HepG2 (cell line): ENCODE measurements at regions of chr18 and their contacts with region 1.

Region 1: DNA sequence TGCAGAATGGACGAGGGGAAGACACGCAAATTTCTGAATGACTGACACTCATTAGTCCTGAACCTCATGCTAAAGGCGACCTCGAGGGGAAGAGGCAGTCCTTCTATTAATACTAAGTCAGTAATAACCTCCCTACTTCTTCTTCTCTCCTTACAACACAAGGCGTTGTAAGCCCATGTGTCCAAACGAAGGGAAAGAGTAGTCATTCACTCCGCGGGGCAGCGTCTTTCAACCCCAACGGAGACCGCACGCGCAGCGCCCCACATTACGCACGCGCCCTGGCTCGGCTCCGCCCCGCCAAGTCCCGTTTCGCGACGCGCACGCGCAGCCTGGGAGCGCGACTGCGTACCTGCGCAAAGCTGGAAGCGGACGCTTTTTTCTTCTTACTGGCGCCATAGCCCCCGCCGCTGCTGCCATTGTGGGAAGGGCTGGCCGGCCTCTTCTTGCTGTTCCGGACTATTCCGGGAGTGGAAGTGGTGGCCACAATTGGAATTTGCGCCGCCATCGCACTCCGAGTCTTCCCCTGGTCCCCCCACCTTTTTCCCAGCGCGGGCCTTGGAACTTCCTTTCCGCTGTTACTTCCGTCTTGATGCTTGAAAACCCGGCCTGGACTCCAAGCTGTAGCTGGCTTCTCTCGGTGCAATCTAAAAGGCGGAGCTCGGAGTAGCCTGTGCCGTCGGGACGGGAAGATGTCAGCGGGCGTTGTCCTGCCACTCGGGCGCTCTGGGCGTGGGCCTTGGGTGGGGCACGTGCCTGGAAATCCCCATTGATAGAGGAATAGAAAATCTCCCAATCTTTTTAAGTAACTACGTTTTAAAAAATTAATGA is at the start of gene INO80C:
- DNase-seq: peak; percentile 85
- ATAC-seq: peak; percentile 96
- H3K4me3 ChIP-seq: peak within 1 kb of the TSS; percentile 66 to 80 (median 73)
- H3K27ac ChIP-seq: peak within 1 kb of the TSS; percentile 91
- H3K4me1 ChIP-seq: peaks cover 75% of the 10 kb centered on the region
- H3K27me3 ChIP-seq: no peaks in the 10 kb centered on the region
- CTCF ChIP-seq: peak; percentile 8; the same call in 1 of the 2 replicates
- EP300 ChIP-seq: peak; percentile 43 to 47; a peak in 2 of 4 replicates
- POLR2A ChIP-seq: peak; percentile 90 to 95
- RAD21 ChIP-seq: peak; percentile 54; the same call in 1 of the 2 replicates
- total RNA-seq, gene INO80C: 8.2 and 10.8 TPM in 2 replicates

Region 2: GRCh38 chr18:35355140-35355618 is 142.4 kb before region 1 on chr18:
- CTCF ChIA-PET with region 1: no interaction called
- POLR2A ChIA-PET with region 1: no interaction called
- in situ Hi-C with region 1: no loop called
- intact Hi-C with region 1: no loop called
- DNase-seq: peak; percentile 85
- ATAC-seq: peak; percentile 100
- H3K4me3 ChIP-seq: peak overlapping the region in 2 of 3 experiments; percentile 25 to 38; a peak in 2 of 6 replicates
- H3K27ac ChIP-seq: no peak overlapping the region
- H3K4me1 ChIP-seq: no peaks in the 10 kb centered on the region
- H3K27me3 ChIP-seq: no peaks in the 10 kb centered on the region
- CTCF ChIP-seq: peak; percentile 92
- EP300 ChIP-seq: no peak
- POLR2A ChIP-seq: no peak
- RAD21 ChIP-seq: peak; percentile 74

Region 3: DNA sequence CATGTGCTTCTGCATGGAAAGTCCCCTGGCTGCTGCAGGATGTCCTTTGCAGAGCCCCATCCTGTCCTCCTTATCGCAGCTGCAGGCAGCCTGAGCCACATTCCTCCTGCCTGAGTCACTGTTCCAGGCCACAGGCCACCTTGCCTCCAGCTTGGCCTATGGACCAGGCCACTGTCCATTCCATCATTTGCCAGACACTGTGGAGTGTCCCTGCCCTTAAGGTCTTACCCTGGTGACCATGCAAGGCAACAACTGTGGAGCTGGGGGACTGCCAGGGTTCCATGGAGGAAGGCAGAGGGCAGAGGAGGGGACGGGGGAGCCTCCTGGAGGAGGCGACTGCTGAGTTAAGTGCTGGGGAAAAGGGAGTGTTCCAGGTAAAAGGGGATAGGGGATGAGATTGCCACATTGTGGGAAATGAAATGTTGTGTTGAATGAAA is 38.6 kb before region 1 on chr18:
- CTCF ChIA-PET with region 1: no interaction called
- POLR2A ChIA-PET with region 1: interaction called, 10 read pairs
- in situ Hi-C with region 1: no loop called
- intact Hi-C with region 1: loop called (anchors 5 kb)
- DNase-seq: peak; percentile 86
- ATAC-seq: peak; percentile 99
- H3K4me3 ChIP-seq: no peak overlapping the region
- H3K27ac ChIP-seq: no peak overlapping the region
- H3K4me1 ChIP-seq: peaks cover 35% of the 10 kb centered on the region
- H3K27me3 ChIP-seq: no peaks in the 10 kb centered on the region
- CTCF ChIP-seq: peak; percentile 28; the same call in 1 of the 2 replicates
- EP300 ChIP-seq: peak in 1 of 2 experiments; percentile 42; a peak in 2 of 4 replicates
- POLR2A ChIP-seq: no peak
- RAD21 ChIP-seq: no peak

Region 4: GRCh38 chr18:35478520-35479435 is 18.8 kb before region 1 on chr18:
- CTCF ChIA-PET with region 1: no interaction called
- POLR2A ChIA-PET with region 1: interaction called, 70 read pairs
- in situ Hi-C with region 1: no loop called
- intact Hi-C with region 1: loop called (anchors 1 kb)
- DNase-seq: peak; percentile 97
- ATAC-seq: peak; percentile 92
- H3K4me3 ChIP-seq: peak overlapping the region in 1 of 3 experiments; percentile 49; a peak in 1 of 6 replicates
- H3K27ac ChIP-seq: peak overlapping the region; percentile 85
- H3K4me1 ChIP-seq: peaks cover 71% of the 10 kb centered on the region
- H3K27me3 ChIP-seq: no peaks in the 10 kb centered on the region; a peak in 1 of 5 replicates
- CTCF ChIP-seq: no peak
- EP300 ChIP-seq: peak in 1 of 2 experiments; percentile 53; a peak in 2 of 4 replicates
- POLR2A ChIP-seq: peak; percentile 54 to 83
- RAD21 ChIP-seq: no peak

Region 5: DNA sequence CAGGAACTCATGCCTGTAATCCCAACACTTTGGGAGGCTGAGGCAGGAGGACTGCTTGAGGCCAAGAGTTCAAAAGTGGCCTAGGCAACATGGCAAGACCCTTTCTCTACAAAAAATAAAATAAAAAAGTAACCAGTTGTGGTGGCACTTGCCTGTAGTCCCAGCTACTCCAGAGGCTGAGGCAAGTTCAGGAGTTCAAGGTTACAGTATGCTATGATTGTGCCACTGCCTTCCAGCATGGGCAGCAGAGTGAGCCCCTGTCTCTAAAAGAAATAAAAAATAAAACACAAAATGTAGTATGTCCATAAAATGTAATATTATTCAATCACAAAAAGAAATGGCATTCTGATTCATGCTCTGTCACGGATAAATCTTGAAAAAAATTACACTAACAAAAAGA is 11.7 kb before region 1 on chr18:
- CTCF ChIA-PET with region 1: no interaction called
- POLR2A ChIA-PET with region 1: interaction called, 70 read pairs
- in situ Hi-C with region 1: no loop called
- intact Hi-C with region 1: loop called (anchors 1 kb)
- DNase-seq: peak; percentile 24
- ATAC-seq: no peak
- H3K4me3 ChIP-seq: no peak overlapping the region
- H3K27ac ChIP-seq: no peak overlapping the region
- H3K4me1 ChIP-seq: peaks cover 73% of the 10 kb centered on the region
- H3K27me3 ChIP-seq: no peaks in the 10 kb centered on the region; a peak in 1 of 5 replicates
- CTCF ChIP-seq: no peak
- EP300 ChIP-seq: no peak
- POLR2A ChIP-seq: no peak
- RAD21 ChIP-seq: no peak

Region 6: DNA sequence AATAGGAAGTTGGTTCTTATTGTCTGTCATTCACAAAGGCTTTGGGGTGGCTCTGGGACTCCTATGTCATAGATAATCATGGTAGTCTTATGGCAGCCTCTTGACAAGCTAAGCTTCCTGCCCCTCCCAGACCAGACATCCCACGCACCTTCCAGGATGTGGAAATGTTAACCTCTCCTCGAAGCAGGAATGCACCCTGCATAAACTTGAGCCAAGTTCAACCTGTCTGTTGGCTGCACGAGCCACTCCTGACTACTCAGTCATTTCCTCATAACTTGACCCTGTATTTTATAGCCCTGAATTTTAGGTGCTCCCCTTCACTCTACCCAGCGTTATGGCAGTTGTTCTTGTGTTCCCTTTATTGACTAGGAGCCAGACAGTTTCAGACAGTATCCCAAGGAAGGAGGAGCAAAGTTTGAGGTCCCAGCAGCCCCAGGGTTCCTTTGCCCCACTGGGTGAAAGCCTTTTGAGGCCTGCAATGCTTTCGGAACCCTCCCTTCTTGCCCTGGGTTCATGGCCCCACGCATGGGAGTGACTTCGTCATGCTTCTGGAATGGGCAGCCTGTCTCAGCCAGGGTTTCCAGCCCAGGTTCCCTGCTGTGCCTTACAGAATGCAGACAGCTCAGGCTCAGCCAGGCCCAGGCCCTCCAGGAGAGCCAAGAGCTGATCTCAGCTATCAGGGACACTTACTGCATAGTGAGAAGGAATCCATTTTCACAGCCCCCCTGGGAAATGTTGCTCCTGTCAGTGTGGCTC is 15.8 kb after region 1 on chr18:
- CTCF ChIA-PET with region 1: no interaction called
- POLR2A ChIA-PET with region 1: interaction called, 27 read pairs
- in situ Hi-C with region 1: no loop called
- intact Hi-C with region 1: no loop called
- DNase-seq: no peak
- ATAC-seq: peak; percentile 23; the same call in 1 of the 3 replicates
- H3K4me3 ChIP-seq: no peak overlapping the region
- H3K27ac ChIP-seq: no peak overlapping the region
- H3K4me1 ChIP-seq: peaks cover 12% of the 10 kb centered on the region
- H3K27me3 ChIP-seq: peaks cover 0 to 3% of the 10 kb centered on the region in 2 experiments; a peak in 1 of 5 replicates
- CTCF ChIP-seq: no peak
- EP300 ChIP-seq: no peak
- POLR2A ChIP-seq: no peak
- RAD21 ChIP-seq: no peak

Region 7: GRCh38 chr18:35580701-35581539 is 83.3 kb after region 1 on chr18:
- CTCF ChIA-PET with region 1: no interaction called
- POLR2A ChIA-PET with region 1: interaction called, 4 read pairs
- in situ Hi-C with region 1: no loop called
- intact Hi-C with region 1: loop called (anchors 2 kb)
- DNase-seq: peak; percentile 23
- ATAC-seq: peak; percentile 88
- H3K4me3 ChIP-seq: peak overlapping the region; percentile 66 to 79 (median 67); a peak in 5 of 6 replicates
- H3K27ac ChIP-seq: peak overlapping the region; percentile 62
- H3K4me1 ChIP-seq: peaks cover 16% of the 10 kb centered on the region
- H3K27me3 ChIP-seq: 0 out of 5 replicates have a peak, but pooled peaks cover 0 to 3% of the 10 kb centered on the region in 2 experiments
- CTCF ChIP-seq: no peak
- EP300 ChIP-seq: no peak
- POLR2A ChIP-seq: no peak
- RAD21 ChIP-seq: no peak; the same call in none of the 2 replicates

Region 8: GRCh38 chr18:35703043-35703688 is 205.6 kb after region 1 on chr18:
- CTCF ChIA-PET with region 1: no interaction called
- POLR2A ChIA-PET with region 1: no interaction called
- in situ Hi-C with region 1: no loop called
- intact Hi-C with region 1: loop called (anchors 5 kb)
- DNase-seq: peak; percentile 94
- ATAC-seq: peak; percentile 92
- H3K4me3 ChIP-seq: no peak overlapping the region; a peak in 1 of 6 replicates
- H3K27ac ChIP-seq: peak overlapping the region; percentile 78
- H3K4me1 ChIP-seq: peaks cover 51% of the 10 kb centered on the region
- H3K27me3 ChIP-seq: no peaks in the 10 kb centered on the region
- CTCF ChIP-seq: no peak
- EP300 ChIP-seq: peak in 1 of 2 experiments; percentile 90; a peak in 2 of 4 replicates
- POLR2A ChIP-seq: no peak
- RAD21 ChIP-seq: no peak

Region 9: GRCh38 chr18:36186911-36187834 is 689.6 kb after region 1 on chr18 and contains the start of gene MOCOS:
- CTCF ChIA-PET with region 1: no interaction called
- POLR2A ChIA-PET with region 1: no interaction called
- in situ Hi-C with region 1: no loop called
- intact Hi-C with region 1: no loop called
- DNase-seq: peak; percentile 68
- ATAC-seq: peak; percentile 91
- H3K4me3 ChIP-seq: peak within 1 kb of the TSS; percentile 79 to 86 (median 81)
- H3K27ac ChIP-seq: peak within 1 kb of the TSS; percentile 72
- H3K4me1 ChIP-seq: peaks cover 63% of the 10 kb centered on the region
- H3K27me3 ChIP-seq: no peaks in the 10 kb centered on the region; a peak in 1 of 5 replicates
- CTCF ChIP-seq: peak; percentile 39
- EP300 ChIP-seq: peak in 1 of 2 experiments; percentile 17; a peak in 1 of 4 replicates
- POLR2A ChIP-seq: peak; percentile 83 to 86
- RAD21 ChIP-seq: peak; percentile 69; the same call in 1 of the 2 replicates
- total RNA-seq, gene MOCOS: 15.4 and 20.0 TPM in 2 replicates